ENCODE measurements at regions of chr3 and their contacts with region 1.

Region 1: GRCh38 chr3:134308350-134308891 is 57.8 kb upstream of the RYK start:
- DNase-seq: peak; percentile 83
- H3K4me3 Mint-ChIP-seq: no peak overlapping the region
- H3K27ac Mint-ChIP-seq: peak overlapping the region; percentile 57
- H3K4me1 Mint-ChIP-seq: peaks cover 32% of the 10 kb centered on the region
- H3K27me3 Mint-ChIP-seq: no peaks in the 10 kb centered on the region
- CTCF ChIP-seq: peak; percentile 97

Region 2: DNA sequence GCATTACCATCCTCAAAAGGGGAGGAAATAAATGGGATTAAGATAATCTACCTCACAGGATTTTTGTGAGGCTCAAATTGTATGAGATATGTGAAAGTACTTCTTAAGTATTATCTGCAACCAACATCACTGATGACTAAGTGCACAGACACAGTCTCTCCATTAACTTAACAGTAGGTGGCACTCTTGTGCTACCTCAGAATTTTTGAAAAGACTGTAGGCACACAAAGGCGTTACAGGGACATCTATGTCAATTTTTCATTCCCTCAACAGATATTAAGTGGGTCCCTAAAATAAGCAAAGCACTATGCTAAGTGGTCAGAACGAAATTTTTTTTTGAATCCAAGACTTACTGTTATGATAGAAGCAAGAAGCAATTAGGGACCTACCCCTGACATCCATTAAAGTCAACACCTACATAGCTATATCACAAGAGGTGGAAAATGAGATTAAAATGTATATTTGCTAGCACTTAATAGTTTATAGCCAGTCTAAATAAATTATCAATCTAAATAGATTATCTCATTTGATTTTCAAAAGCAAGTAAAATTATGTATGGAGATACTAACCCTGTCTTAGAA is 110.7 kb before region 1 on chr3:
- CTCF ChIA-PET with region 1: interaction called, 64 read pairs
- POLR2A ChIA-PET with region 1: interaction called, 4 read pairs
- intact Hi-C with region 1: no loop called
- DNase-seq: peak; percentile 76
- H3K4me3 Mint-ChIP-seq: no peak overlapping the region
- H3K27ac Mint-ChIP-seq: peak overlapping the region; percentile 20
- H3K4me1 Mint-ChIP-seq: peaks cover 29% of the 10 kb centered on the region
- H3K27me3 Mint-ChIP-seq: no peaks in the 10 kb centered on the region
- CTCF ChIP-seq: peak; percentile 83

Region 3: DNA sequence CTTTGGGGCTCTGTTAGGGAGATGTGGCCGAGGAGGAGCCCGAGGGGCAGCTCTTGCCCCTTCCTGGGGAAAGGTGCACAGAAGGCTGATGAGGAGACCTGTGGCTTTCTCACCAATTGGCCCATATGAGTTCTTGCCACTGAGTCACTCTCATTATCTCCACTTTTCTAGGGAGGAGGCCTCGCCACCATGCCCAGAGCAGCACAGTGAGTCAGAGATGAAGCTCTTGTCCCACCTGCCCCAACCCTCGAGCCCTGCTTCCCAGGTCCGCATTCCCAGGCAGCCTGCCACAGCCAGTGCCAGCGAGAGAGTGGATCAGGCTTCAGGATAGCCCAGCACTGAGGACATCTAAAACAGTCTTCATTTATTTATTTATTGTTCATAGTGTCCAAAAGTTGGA is 12.3 kb after region 1 on chr3:
- CTCF ChIA-PET with region 1: interaction called, 23 read pairs
- POLR2A ChIA-PET with region 1: interaction called, 15 read pairs
- intact Hi-C with region 1: no loop called
- DNase-seq: peak; percentile 84
- H3K4me3 Mint-ChIP-seq: no peak overlapping the region
- H3K27ac Mint-ChIP-seq: peak overlapping the region; percentile 66
- H3K4me1 Mint-ChIP-seq: peaks cover 43% of the 10 kb centered on the region
- H3K27me3 Mint-ChIP-seq: no peaks in the 10 kb centered on the region
- CTCF ChIP-seq: no peak

Region 4: GRCh38 chr3:134339331-134339730 is 30.9 kb after region 1 on chr3:
- CTCF ChIA-PET with region 1: interaction called, 12 read pairs
- POLR2A ChIA-PET with region 1: no interaction called
- intact Hi-C with region 1: no loop called
- DNase-seq: no peak
- H3K4me3 Mint-ChIP-seq: no peak overlapping the region
- H3K27ac Mint-ChIP-seq: no peak overlapping the region
- H3K4me1 Mint-ChIP-seq: peaks cover 56% of the 10 kb centered on the region
- H3K27me3 Mint-ChIP-seq: no peaks in the 10 kb centered on the region
- CTCF ChIP-seq: no peak

Region 5: GRCh38 chr3:134364061-134364935 is 55.9 kb after region 1 on chr3:
- CTCF ChIA-PET with region 1: interaction called, 63 read pairs
- POLR2A ChIA-PET with region 1: interaction called, 39 read pairs
- intact Hi-C with region 1: loop called (anchors 2 kb)
- DNase-seq: peak; percentile 96
- H3K4me3 Mint-ChIP-seq: peak overlapping the region; percentile 29
- H3K27ac Mint-ChIP-seq: peak overlapping the region; percentile 28
- H3K4me1 Mint-ChIP-seq: peaks cover 30% of the 10 kb centered on the region
- H3K27me3 Mint-ChIP-seq: no peaks in the 10 kb centered on the region
- CTCF ChIP-seq: no peak

Region 6: DNA sequence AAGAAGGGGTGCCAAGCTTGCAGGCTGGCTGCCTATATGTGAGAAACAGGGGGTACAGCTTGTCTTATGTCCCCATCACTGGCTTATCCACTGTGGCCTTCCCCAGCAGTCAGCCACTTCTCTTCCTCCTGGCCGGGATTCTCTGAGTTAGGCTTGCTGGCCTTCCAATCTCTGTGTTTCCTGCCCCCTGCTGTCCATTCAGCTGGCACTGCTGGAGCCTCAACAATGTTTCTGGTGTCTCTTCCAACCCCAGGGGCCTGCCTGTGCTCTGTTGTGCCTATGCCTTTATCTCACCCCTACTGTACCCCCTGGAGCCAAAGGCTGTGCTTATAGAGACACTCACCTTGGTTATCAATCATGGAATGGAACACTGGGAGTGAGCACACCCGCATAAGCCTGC is 140.9 kb after region 1 on chr3:
- CTCF ChIA-PET with region 1: interaction called, 58 read pairs
- POLR2A ChIA-PET with region 1: interaction called, 4 read pairs
- intact Hi-C with region 1: loop called (anchors 1 kb)
- DNase-seq: peak; percentile 67
- H3K4me3 Mint-ChIP-seq: no peak overlapping the region
- H3K27ac Mint-ChIP-seq: no peak overlapping the region
- H3K4me1 Mint-ChIP-seq: peaks cover 37% of the 10 kb centered on the region
- H3K27me3 Mint-ChIP-seq: no peaks in the 10 kb centered on the region
- CTCF ChIP-seq: peak; percentile 47

Measured in MCF 10A (cell line).